Activated T-helper 1 cell treated with anti-CD3 and anti-CD28 coated beads, Interleukin-12 subunit alpha, Interleukin-12 subunit beta, Interleukin-2, Interleukin-4 antibody, amounts not matched to agents 30 ng/mL and 10 ng/mL and 1 ng/mL, durations not matched to agents 14 hours and 24 hours and 36 hours (primary cell): ENCODE measurements at regions of chr9 and their contacts with region 1.

Region 1: GRCh38 chr9:1875921-1876448 is 139.2 kb upstream of the SMARCA2 start:
- DNase-seq: peak; percentile 20
- H3K4me3 Mint-ChIP-seq: no peak overlapping the region
- H3K27ac Mint-ChIP-seq: peak overlapping the region; percentile 83
- H3K4me1 Mint-ChIP-seq: peaks cover 28% of the 10 kb centered on the region
- H3K27me3 Mint-ChIP-seq: peaks cover 22% of the 10 kb centered on the region

Region 2: DNA sequence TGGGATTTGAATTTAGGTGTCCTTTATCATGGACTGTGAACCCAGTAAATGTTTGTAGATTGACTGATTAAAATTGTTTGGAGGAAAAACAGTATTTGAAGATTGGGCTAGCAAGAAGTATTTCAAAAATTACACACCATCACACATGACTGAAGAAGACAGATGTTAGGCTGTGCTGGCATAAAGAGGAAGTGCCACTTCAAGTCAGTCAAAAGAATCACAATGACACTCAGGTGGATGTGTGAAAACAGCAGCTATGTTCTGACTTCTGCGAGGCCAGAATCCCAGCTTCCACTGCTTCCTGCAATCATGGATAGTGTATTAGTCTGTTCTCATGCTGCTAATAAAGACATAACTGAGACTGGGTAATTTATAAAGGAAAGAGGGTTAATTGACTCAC is 432.5 kb before region 1 on chr9:
- intact Hi-C with region 1: no loop called
- DNase-seq: no peak
- H3K4me3 Mint-ChIP-seq: no peak overlapping the region
- H3K27ac Mint-ChIP-seq: no peak overlapping the region
- H3K4me1 Mint-ChIP-seq: no peaks in the 10 kb centered on the region
- H3K27me3 Mint-ChIP-seq: no peaks in the 10 kb centered on the region

Region 3: GRCh38 chr9:1536522-1537170 is 339.3 kb before region 1 on chr9:
- intact Hi-C with region 1: loop called (anchors 1 kb)
- DNase-seq: no peak
- H3K4me3 Mint-ChIP-seq: no peak overlapping the region
- H3K27ac Mint-ChIP-seq: peak overlapping the region; percentile 48
- H3K4me1 Mint-ChIP-seq: peaks cover 18% of the 10 kb centered on the region
- H3K27me3 Mint-ChIP-seq: no peaks in the 10 kb centered on the region

Region 4: DNA sequence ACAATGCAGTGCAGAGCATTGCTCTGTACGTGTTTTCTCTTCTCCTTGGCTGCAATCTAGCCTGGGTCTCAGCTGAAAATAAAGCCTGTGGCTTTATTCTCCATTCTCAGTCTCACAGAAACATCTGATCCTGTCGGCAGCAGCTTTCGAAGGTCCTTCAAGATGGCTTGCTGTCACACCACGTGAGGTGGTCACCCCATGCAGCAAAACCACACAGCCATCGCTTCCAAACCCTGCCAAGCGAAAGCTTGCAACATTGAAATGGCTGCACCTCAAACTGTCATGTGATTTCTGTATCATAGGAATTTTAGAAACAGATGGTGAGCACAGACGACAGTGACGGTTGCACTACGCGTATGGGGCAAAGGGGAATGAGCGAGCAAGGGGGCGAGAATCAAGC is 40.7 kb after region 1 on chr9:
- intact Hi-C with region 1: no loop called
- DNase-seq: no peak
- H3K4me3 Mint-ChIP-seq: no peak overlapping the region
- H3K27ac Mint-ChIP-seq: no peak overlapping the region
- H3K4me1 Mint-ChIP-seq: no peaks in the 10 kb centered on the region
- H3K27me3 Mint-ChIP-seq: peaks cover 15% of the 10 kb centered on the region

Region 5: DNA sequence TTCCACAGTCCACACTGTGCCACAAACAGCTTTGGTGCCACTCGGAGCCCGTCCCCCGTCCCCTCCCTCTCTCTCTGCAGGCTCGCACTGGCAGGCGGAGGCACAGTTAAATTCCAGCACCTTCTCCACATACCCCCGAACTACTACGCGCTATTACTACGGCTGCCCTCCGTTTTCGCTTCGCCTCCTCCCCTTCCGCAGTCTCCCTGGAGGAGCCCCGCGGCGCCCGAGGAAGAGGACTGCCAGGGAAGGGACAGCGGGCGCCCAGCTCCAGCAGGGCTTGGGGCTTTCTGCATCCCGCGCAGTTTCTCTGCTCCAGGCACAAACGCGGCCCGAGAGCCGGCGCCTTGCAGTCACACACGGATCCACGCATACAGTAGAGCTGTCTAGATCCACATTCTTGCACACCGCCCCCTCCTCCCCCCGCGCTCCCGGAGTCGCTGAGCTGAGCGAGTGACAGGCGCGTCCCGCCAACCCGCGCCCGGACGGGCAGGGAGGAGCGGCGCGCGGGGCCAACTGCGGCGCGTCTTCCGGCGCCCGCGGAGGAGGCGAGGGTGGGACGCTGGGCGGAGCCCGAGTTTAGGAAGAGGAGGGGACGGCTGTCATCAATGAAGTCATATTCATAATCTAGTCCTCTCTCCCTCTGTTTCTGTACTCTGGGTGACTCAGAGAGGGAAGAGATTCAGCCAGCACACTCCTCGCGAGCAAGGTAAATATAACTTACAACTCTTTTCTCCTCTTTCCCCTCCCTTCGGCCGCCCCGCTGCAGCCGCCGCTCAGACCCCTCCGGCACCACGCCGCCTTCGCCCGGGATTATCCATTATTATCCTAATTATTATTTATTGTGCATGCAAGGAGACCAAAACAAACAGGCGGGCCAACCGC is 139.0 kb after region 1 on chr9 and contains the start of gene SMARCA2:
- intact Hi-C with region 1: loop called (anchors 1 kb)
- DNase-seq: peak; percentile 97
- H3K4me3 Mint-ChIP-seq: peak within 1 kb of the TSS; percentile 99
- H3K27ac Mint-ChIP-seq: peak within 1 kb of the TSS; percentile 99
- H3K4me1 Mint-ChIP-seq: peaks cover 44% of the 10 kb centered on the region
- H3K27me3 Mint-ChIP-seq: peaks cover 5% of the 10 kb centered on the region
- total RNA-seq, gene SMARCA2: 105 and 108 TPM in 2 replicates

Region 6: DNA sequence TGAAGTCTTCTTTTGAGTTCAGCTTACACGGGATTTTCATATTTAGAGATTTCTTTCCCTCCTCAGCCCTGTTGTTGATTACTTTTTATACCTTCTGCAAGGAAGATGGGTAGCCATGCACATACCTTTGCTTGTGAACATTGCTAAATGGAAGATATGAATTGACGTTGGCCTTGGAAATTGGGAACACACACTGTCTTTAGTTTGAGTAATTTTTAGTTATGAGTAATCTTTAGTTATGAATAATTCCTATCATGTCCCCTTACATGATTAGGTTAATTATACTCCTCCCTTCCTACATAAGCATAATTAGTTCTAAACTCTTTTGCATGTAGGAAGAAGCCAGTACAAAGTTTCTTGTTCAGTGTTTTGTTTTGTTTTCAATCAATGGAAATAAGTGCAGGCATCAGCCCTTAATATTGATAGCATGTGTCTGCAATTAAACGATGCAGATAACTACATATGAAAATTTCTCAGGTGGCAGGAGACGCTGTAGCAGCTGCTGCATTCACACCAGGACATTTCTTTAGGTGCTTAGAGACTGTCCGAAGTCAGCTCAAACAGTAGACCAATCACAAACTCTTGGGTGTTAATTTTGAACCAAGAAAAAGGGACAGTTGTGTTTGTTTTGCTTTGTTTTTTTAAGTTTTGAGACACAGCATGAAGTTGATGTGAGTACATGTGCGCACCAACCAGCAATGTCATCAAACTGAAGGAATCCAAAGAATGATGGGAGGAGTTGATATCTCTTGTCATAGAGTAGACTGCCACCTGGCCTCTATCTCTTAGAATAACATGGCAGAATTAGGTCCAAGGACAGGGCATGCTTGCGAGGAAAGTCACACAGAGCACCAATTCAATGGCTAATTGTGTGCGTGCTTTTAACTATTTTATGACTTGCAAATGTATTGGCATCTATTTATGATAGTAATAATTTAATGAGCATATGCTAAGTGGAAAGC is 190.6 kb after region 1 on chr9:
- intact Hi-C with region 1: loop called (anchors 5 kb)
- DNase-seq: no peak
- H3K4me3 Mint-ChIP-seq: no peak overlapping the region
- H3K27ac Mint-ChIP-seq: no peak overlapping the region
- H3K4me1 Mint-ChIP-seq: peaks cover 7% of the 10 kb centered on the region
- H3K27me3 Mint-ChIP-seq: no peaks in the 10 kb centered on the region

Region 7: GRCh38 chr9:2193552-2193951 is 317.6 kb after region 1 on chr9:
- intact Hi-C with region 1: loop called (anchors 5 kb)
- DNase-seq: no peak
- H3K4me3 Mint-ChIP-seq: no peak overlapping the region
- H3K27ac Mint-ChIP-seq: peak overlapping the region; percentile 1
- H3K4me1 Mint-ChIP-seq: peaks cover 15% of the 10 kb centered on the region
- H3K27me3 Mint-ChIP-seq: no peaks in the 10 kb centered on the region